Mammary epithelial cell (primary cell): ENCODE measurements at regions of chr16 and their contacts with region 1.

Region 1: GRCh38 chr16:54929090-54930004 is 1.3 kb upstream of the IRX5 start:
- DNase-seq: peak; percentile 99
- H3K4me3 ChIP-seq: peak overlapping the region; percentile 71 to 78 (median 72)
- H3K27ac ChIP-seq: peak overlapping the region; percentile 86
- H3K4me1 ChIP-seq: peaks cover 17% of the 10 kb centered on the region
- H3K27me3 ChIP-seq: no peaks in the 10 kb centered on the region
- CTCF ChIP-seq: peak in 1 of 2 donors; percentile 46

Region 2: DNA sequence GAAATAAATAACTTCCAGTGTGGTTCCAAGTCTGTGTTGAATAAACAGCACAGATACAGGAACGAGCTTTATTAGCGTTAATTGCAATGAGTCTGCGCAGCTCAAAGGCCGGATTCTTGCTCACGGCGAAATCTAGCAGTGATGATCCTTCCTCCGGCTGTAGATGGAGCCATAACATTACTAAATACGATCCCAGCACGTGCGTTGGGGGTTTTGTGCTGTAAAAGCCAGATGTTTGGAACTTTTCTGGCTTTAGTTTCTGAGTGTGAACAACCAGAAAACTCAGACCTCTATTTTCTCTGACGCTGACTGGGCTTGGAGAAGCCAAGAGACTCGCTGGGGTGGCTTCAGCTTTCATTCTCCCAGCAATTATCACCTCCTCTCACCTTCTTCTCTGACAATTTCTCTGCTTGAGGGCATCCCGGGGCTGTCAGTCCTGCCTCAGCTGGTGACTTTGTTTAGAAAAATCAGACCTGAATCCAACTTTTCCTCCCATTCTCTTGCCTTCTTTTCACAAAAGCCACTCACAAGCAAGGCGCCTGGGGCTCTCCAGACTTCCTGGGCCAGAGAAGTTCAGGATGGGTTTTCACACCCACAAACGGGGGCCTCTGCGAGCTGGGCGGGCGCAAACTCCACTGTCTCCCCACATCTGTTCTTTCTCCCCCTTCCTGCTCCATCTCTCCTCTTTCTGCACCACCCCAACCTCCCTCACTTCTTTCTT is 1379.2 kb before region 1 on chr16:
- CTCF ChIA-PET with region 1: no interaction called
- dilution Hi-C with region 1: no loop called
- in situ Hi-C with region 1: no loop called
- intact Hi-C with region 1: loop called (anchors 1 kb)
- DNase-seq: peak; percentile 60
- H3K4me3 ChIP-seq: no peak overlapping the region
- H3K27ac ChIP-seq: no peak overlapping the region
- H3K4me1 ChIP-seq: no peaks in the 10 kb centered on the region
- H3K27me3 ChIP-seq: no peaks in the 10 kb centered on the region
- CTCF ChIP-seq: peak; percentile 72 to 76

Region 3: DNA sequence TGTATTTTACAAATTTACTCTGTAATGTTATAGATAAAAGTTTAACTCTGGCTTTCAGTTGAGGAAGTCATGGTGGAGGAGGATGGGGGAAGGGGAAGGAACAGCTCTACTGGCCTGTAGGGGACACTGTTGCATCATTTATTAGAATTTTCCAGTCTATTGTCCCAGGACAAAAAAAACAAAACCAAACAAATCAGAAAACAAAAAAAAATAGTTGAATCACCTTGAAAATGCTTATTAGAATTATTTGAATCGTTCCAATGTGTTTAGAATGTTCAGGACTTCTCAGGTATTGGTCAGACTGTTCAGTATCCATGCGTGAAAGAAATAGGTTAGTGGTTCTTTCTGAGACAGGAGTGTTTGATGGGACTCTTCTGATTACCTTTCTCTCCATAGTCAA is 983.4 kb before region 1 on chr16:
- CTCF ChIA-PET with region 1: no interaction called
- dilution Hi-C with region 1: no loop called
- in situ Hi-C with region 1: no loop called
- intact Hi-C with region 1: loop called (anchors 1 kb)
- DNase-seq: peak; percentile 43
- H3K4me3 ChIP-seq: no peak overlapping the region
- H3K27ac ChIP-seq: no peak overlapping the region
- H3K4me1 ChIP-seq: peaks cover 3% of the 10 kb centered on the region
- H3K27me3 ChIP-seq: no peaks in the 10 kb centered on the region
- CTCF ChIP-seq: peak; percentile 83 to 94

Region 4: GRCh38 chr16:54633943-54634362 is 295.4 kb before region 1 on chr16:
- CTCF ChIA-PET with region 1: interaction called, 5 read pairs
- dilution Hi-C with region 1: no loop called
- in situ Hi-C with region 1: no loop called
- intact Hi-C with region 1: loop called (anchors 2 kb)
- DNase-seq: peak; percentile 43
- H3K4me3 ChIP-seq: no peak overlapping the region
- H3K27ac ChIP-seq: peak overlapping the region; percentile 2
- H3K4me1 ChIP-seq: no peaks in the 10 kb centered on the region
- H3K27me3 ChIP-seq: no peaks in the 10 kb centered on the region
- CTCF ChIP-seq: peak; percentile 80 to 91

Region 5: GRCh38 chr16:54817446-54817845 is 111.9 kb before region 1 on chr16:
- CTCF ChIA-PET with region 1: no interaction called
- dilution Hi-C with region 1: loop called (anchors 10 kb)
- in situ Hi-C with region 1: no loop called
- intact Hi-C with region 1: loop called (anchors 1 kb)
- DNase-seq: peak; percentile 59
- H3K4me3 ChIP-seq: no peak overlapping the region
- H3K27ac ChIP-seq: no peak overlapping the region
- H3K4me1 ChIP-seq: peaks cover 2% of the 10 kb centered on the region
- H3K27me3 ChIP-seq: no peaks in the 10 kb centered on the region
- CTCF ChIP-seq: peak; percentile 56 to 83

Region 6: DNA sequence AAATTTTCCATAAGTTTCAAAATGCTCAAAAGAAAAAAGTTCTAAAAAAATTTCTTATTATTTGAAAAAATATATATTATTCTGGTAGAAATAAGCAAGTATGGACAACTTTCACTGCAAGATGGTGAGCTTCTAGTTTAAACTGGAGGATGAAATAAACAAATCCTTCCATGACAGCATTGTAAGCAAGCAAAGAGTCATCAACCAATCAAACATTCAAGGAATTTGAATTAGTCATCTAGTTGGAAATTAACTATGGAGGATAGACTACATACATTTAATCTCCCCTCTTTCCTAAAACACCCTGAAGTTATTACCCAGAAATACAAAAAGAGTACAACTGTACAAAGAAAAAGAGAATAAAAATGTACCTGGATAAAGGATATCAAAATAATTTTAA is 49.7 kb before region 1 on chr16:
- CTCF ChIA-PET with region 1: no interaction called
- dilution Hi-C with region 1: no loop called
- in situ Hi-C with region 1: no loop called
- intact Hi-C with region 1: loop called (anchors 5 kb)
- DNase-seq: peak; percentile 41
- H3K4me3 ChIP-seq: no peak overlapping the region
- H3K27ac ChIP-seq: no peak overlapping the region
- H3K4me1 ChIP-seq: no peaks in the 10 kb centered on the region
- H3K27me3 ChIP-seq: no peaks in the 10 kb centered on the region
- CTCF ChIP-seq: no peak